CD14-positive monocyte (primary cell): ENCODE measurements at regions of chr19 and their contacts with region 1.

Region 1: GRCh38 chr19:54159352-54160181 is at the start of gene LENG1:
- DNase-seq: peak; percentile 100
- H3K4me3 ChIP-seq: peak within 1 kb of the TSS; percentile 69 to 94 (median 72)
- H3K4me3 Mint-ChIP-seq: peak within 1 kb of the TSS; percentile 88 to 95
- H3K27ac ChIP-seq: peak within 1 kb of the TSS; percentile 78 to 93
- H3K27ac Mint-ChIP-seq: peak within 1 kb of the TSS; percentile 96 to 99 (median 98)
- H3K4me1 ChIP-seq: peaks cover 54 to 62% of the 10 kb centered on the region in 2 donors
- H3K4me1 Mint-ChIP-seq: peaks cover 60% of the 10 kb centered on the region
- H3K27me3 ChIP-seq: peaks cover 0 to 3% of the 10 kb centered on the region in 2 donors
- H3K27me3 Mint-ChIP-seq: peaks cover 0 to 15% (median 7%) of the 10 kb centered on the region in 3 donors
- CTCF ChIP-seq: peak; percentile 19
- polyA plus RNA-seq, gene LENG1: 3.4 to 5.4 (median 4.2) TPM

Region 2: DNA sequence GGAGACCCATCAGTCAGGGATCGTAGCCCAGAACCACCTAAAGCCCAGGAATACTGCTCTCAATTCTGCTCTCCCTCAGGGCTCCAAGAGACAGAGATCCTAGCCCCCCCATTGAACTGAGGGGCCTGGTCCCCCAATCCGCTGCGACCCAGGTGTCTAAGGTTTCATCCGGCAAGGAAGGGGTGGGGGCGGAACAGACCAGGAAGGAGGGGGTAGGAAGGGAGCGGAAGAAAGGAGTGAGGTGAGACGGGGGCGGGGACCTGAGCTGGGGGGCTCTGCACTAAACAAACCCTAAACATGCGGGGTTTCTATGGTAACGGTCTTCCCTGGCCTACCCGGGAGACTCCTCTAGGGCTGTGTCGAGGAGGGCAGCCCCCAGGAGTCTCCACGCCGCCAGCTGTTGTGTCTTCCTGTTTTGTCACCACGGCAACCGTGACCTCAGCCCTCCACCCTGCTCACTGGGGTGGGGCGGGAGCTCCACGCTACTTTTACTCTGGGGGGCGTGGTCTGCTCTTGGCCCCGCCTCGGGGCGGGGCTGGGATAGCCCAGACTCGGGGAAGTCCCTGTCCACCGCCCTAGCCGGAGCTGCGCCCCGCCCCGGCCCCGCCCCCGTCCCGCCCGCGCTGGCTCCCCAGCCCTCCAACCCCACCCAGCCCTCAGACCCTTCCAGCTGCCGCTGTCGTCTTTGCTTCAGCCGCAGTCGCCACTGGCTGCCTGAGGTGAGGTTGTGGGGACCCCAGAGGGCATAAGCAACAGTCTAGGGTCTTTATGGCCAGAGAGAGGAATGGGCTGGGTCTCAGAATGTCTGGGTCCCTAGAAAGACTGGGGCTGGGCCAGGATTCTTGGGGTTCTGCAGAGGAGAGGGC is 292.1 kb before region 1 on chr19 and contains the start of gene MYADM:
- intact Hi-C with region 1: no loop called
- DNase-seq: peak; percentile 99 to 100 (median 99)
- H3K4me3 ChIP-seq: peak within 1 kb of the TSS; percentile 77 to 100 (median 100)
- H3K4me3 Mint-ChIP-seq: peak within 1 kb of the TSS; percentile 97 to 99
- H3K27ac ChIP-seq: peak within 1 kb of the TSS; percentile 99
- H3K27ac Mint-ChIP-seq: peak within 1 kb of the TSS; percentile 98 to 100 (median 99)
- H3K4me1 ChIP-seq: peaks cover 47 to 52% of the 10 kb centered on the region in 2 donors
- H3K4me1 Mint-ChIP-seq: peaks cover 49% of the 10 kb centered on the region
- H3K27me3 ChIP-seq: no peaks in the 10 kb centered on the region
- H3K27me3 Mint-ChIP-seq: peaks cover 0 to 20% (median 18%) of the 10 kb centered on the region in 3 donors
- CTCF ChIP-seq: no peak
- polyA plus RNA-seq, gene MYADM: 162 to 310 (median 254) TPM

Region 3: DNA sequence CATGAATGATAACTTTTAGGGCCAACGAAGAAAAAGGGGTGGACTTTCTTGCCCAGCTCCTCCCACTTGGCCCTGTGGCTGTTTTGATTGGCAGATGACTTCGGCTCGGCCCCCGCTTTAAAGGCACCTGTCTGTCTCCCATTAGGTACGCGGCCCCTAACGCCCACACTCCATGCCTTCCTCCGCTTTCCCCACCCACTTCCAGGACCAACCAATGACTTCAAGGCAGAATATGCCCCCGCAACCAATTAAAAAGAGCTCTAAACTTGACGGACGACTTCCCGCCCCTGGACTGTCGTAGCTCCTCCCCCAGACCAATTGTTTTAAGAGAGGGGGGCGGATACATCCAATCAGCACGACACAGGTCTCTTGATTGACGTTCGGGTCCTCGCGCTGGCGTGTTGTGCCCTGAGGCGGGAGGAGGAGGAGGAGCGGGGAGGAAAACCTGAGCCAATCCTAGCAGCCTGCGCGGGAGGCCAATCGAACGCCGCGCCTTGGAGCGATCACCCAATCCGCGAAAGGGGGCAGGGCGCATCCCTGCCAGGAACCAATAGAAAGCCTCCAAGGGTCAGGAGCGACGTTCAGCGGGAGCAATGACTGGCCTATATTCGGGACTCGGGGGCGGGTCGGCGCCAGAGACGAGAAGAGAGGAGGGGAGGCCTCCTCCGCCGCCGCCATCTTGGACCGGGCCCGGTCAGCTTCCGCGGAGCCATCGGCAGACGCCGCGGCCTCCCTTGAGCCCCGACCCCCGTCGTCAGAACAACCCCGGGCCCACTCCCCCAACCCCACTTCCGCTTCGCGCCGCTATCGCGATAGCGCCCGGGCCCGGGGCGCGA is 22.3 kb before region 1 on chr19 and contains the start of gene CNOT3:
- intact Hi-C with region 1: loop called (anchors 1 to 2 kb)
- DNase-seq: peak; percentile 100
- H3K4me3 ChIP-seq: peak within 1 kb of the TSS; percentile 66 to 92 (median 87)
- H3K4me3 Mint-ChIP-seq: peak within 1 kb of the TSS; percentile 82 to 93
- H3K27ac ChIP-seq: peak within 1 kb of the TSS; percentile 21 to 91
- H3K27ac Mint-ChIP-seq: peak within 1 kb of the TSS; percentile 82 to 95 (median 94)
- H3K4me1 ChIP-seq: peaks cover 28 to 39% of the 10 kb centered on the region in 2 donors
- H3K4me1 Mint-ChIP-seq: peaks cover 38% of the 10 kb centered on the region
- H3K27me3 ChIP-seq: peaks cover 0 to 3% of the 10 kb centered on the region in 2 donors
- H3K27me3 Mint-ChIP-seq: peaks cover 2 to 12% (median 2%) of the 10 kb centered on the region in 3 donors
- CTCF ChIP-seq: no peak
- polyA plus RNA-seq, gene CNOT3: 3.0 to 22.5 (median 4.2) TPM